Natural killer cell (primary cell): ENCODE measurements at regions of chr17 and their contacts with region 1.

Region 1: GRCh38 chr17:21252796-21253645 is at the start of gene NATD1:
- DNase-seq: peak; percentile 80 to 91
- ATAC-seq: peak; percentile 83 to 92 (median 88)
- H3K4me3 ChIP-seq: peak within 1 kb of the TSS; percentile 64
- H3K4me3 Mint-ChIP-seq: peak within 1 kb of the TSS; percentile 85
- H3K27ac ChIP-seq: peak within 1 kb of the TSS; percentile 66
- H3K27ac Mint-ChIP-seq: peak within 1 kb of the TSS; percentile 89 to 93
- H3K4me1 ChIP-seq: peaks cover 25% of the 10 kb centered on the region
- H3K4me1 Mint-ChIP-seq: peaks cover 33 to 49% of the 10 kb centered on the region in 2 donors
- H3K27me3 ChIP-seq: no peaks in the 10 kb centered on the region
- H3K27me3 Mint-ChIP-seq: no peaks in the 10 kb centered on the region
- CTCF ChIP-seq: no peak
- total RNA-seq, gene NATD1: 10.9 to 16.3 (median 14.1) TPM

Region 2: DNA sequence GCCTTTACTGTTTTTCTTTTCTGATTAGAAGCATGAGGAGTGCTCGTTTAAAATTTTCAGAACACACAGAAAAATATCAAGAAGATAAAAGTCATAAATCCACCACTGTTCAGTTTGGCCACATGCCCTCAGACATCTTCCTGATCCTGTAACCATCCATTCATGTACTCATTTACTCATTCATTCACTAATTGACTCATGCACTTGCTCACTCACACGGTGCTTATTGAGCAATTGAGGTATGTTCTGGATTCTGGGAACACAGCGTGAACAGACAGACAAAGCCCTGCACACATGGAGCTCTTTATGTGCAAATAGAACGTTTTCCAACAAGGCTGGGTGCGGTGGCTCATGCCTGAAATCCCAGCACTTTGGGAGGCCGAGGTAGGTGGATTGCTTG is 10.3 kb after region 1 on chr17:
- intact Hi-C with region 1: loop called (anchors 2 kb)
- DNase-seq: no peak
- ATAC-seq: no peak
- H3K4me3 ChIP-seq: no peak overlapping the region
- H3K4me3 Mint-ChIP-seq: no peak overlapping the region
- H3K27ac ChIP-seq: no peak overlapping the region
- H3K27ac Mint-ChIP-seq: no peak overlapping the region
- H3K4me1 ChIP-seq: peaks cover 19% of the 10 kb centered on the region
- H3K4me1 Mint-ChIP-seq: peaks cover 7 to 19% of the 10 kb centered on the region in 2 donors
- H3K27me3 ChIP-seq: no peaks in the 10 kb centered on the region
- H3K27me3 Mint-ChIP-seq: no peaks in the 10 kb centered on the region
- CTCF ChIP-seq: no peak

Region 3: GRCh38 chr17:21345236-21345635 is 92.2 kb after region 1 on chr17:
- intact Hi-C with region 1: no loop called
- DNase-seq: no peak
- ATAC-seq: no peak
- H3K4me3 ChIP-seq: no peak overlapping the region
- H3K4me3 Mint-ChIP-seq: no peak overlapping the region
- H3K27ac ChIP-seq: no peak overlapping the region
- H3K27ac Mint-ChIP-seq: no peak overlapping the region
- H3K4me1 ChIP-seq: peaks cover 24% of the 10 kb centered on the region
- H3K4me1 Mint-ChIP-seq: peaks cover 5 to 17% of the 10 kb centered on the region in 2 donors
- H3K27me3 ChIP-seq: no peaks in the 10 kb centered on the region
- H3K27me3 Mint-ChIP-seq: no peaks in the 10 kb centered on the region
- CTCF ChIP-seq: no peak